ENCODE measurements at regions of chr17 and their contacts with region 1.

Region 1: GRCh38 chr17:82267575-82268379 is 5.7 kb downstream of the CSNK1D start:
- DNase-seq: peak in 3 of 4 experiments; percentile 45 to 83 (median 69)
- ATAC-seq: peak; percentile 92
- H3K4me3 ChIP-seq: no peak overlapping the region; the same call in 1 of the 2 replicates
- H3K27ac ChIP-seq: peak overlapping the region; percentile 75
- H3K4me1 ChIP-seq: peaks cover 41 to 57% of the 10 kb centered on the region in 2 experiments
- H3K27me3 ChIP-seq: no peaks in the 10 kb centered on the region
- CTCF ChIP-seq: 0 out of 6 replicates have a peak, but pooled peaks of 1 of the 3 experiments have one; percentile 24
- EP300 ChIP-seq: no peak
- POLR2A ChIP-seq: no peak; the same call in 1 of the 2 replicates
- RAD21 ChIP-seq: no peak; a peak in 2 of 4 replicates

Region 2: GRCh38 chr17:82257473-82257872 is 10.3 kb before region 1 on chr17:
- CTCF ChIA-PET with region 1: no interaction called
- POLR2A ChIA-PET with region 1: interaction called, 20 read pairs
- in situ Hi-C with region 1: no loop called
- intact Hi-C with region 1: no loop called
- DNase-seq: peak in 2 of 4 experiments; percentile 62 to 73
- ATAC-seq: peak; percentile 69
- H3K4me3 ChIP-seq: no peak overlapping the region
- H3K27ac ChIP-seq: no peak overlapping the region
- H3K4me1 ChIP-seq: 0 out of 5 replicates have a peak, but pooled peaks cover 0 to 3% of the 10 kb centered on the region in 2 experiments
- H3K27me3 ChIP-seq: no peaks in the 10 kb centered on the region
- CTCF ChIP-seq: no peak
- EP300 ChIP-seq: no peak
- POLR2A ChIP-seq: no peak
- RAD21 ChIP-seq: no peak

Measured in K562 (cell line).